Calu3 (cell line): ENCODE measurements at regions of chr6 and their contacts with region 1.

Region 1: GRCh38 chr6:155174576-155175211 is 89.1 kb upstream of the CLDN20 start:
- DNase-seq: peak; percentile 70
- H3K4me3 Mint-ChIP-seq: no peak overlapping the region
- H3K27ac Mint-ChIP-seq: peak overlapping the region; percentile 51
- H3K4me1 Mint-ChIP-seq: peaks cover 31% of the 10 kb centered on the region
- H3K27me3 Mint-ChIP-seq: no peaks in the 10 kb centered on the region
- CTCF ChIP-seq: peak; percentile 52

Region 2: GRCh38 chr6:154868143-154868594 is 306.5 kb before region 1 on chr6:
- CTCF ChIA-PET with region 1: interaction called, 7 read pairs
- intact Hi-C with region 1: loop called (anchors 2 kb)
- DNase-seq: peak; percentile 7
- H3K4me3 Mint-ChIP-seq: no peak overlapping the region
- H3K27ac Mint-ChIP-seq: no peak overlapping the region
- H3K4me1 Mint-ChIP-seq: peaks cover 9% of the 10 kb centered on the region
- H3K27me3 Mint-ChIP-seq: no peaks in the 10 kb centered on the region
- CTCF ChIP-seq: peak; percentile 23

Region 3: DNA sequence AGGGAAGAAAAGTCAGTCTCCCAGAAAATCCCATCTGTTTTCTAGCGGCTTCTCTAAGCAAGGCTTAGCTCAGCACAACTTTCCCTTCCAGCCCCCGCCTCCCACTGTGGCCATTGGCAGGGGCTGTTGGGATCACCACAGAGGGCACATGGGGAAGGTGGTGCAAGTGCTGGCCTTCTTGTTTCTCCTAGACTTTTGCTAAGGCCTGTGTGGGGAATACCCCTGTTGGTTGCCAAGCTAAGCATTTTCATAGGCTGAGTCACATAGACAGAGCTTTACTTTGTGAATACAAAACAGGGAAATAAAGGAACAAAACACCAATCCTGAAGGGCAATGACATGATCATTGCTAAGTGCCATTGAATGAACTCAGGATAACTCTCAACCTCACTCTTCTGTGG is 211.9 kb before region 1 on chr6:
- CTCF ChIA-PET with region 1: interaction called, 4 read pairs
- intact Hi-C with region 1: loop called (anchors 10 kb)
- DNase-seq: peak; percentile 46
- H3K4me3 Mint-ChIP-seq: no peak overlapping the region
- H3K27ac Mint-ChIP-seq: peak overlapping the region; percentile 71
- H3K4me1 Mint-ChIP-seq: peaks cover 28% of the 10 kb centered on the region
- H3K27me3 Mint-ChIP-seq: no peaks in the 10 kb centered on the region
- CTCF ChIP-seq: no peak

Region 4: GRCh38 chr6:155085582-155086257 is 89.0 kb before region 1 on chr6:
- CTCF ChIA-PET with region 1: interaction called, 3 read pairs
- intact Hi-C with region 1: loop called (anchors 1 kb)
- DNase-seq: peak; percentile 76
- H3K4me3 Mint-ChIP-seq: peak overlapping the region; percentile 40
- H3K27ac Mint-ChIP-seq: peak overlapping the region; percentile 66
- H3K4me1 Mint-ChIP-seq: peaks cover 31% of the 10 kb centered on the region
- H3K27me3 Mint-ChIP-seq: no peaks in the 10 kb centered on the region
- CTCF ChIP-seq: no peak

Region 5: GRCh38 chr6:155126727-155127439 is 47.8 kb before region 1 on chr6:
- CTCF ChIA-PET with region 1: no interaction called
- intact Hi-C with region 1: loop called (anchors 1 kb)
- DNase-seq: peak; percentile 80
- H3K4me3 Mint-ChIP-seq: peak overlapping the region; percentile 50
- H3K27ac Mint-ChIP-seq: peak overlapping the region; percentile 97
- H3K4me1 Mint-ChIP-seq: peaks cover 37% of the 10 kb centered on the region
- H3K27me3 Mint-ChIP-seq: no peaks in the 10 kb centered on the region
- CTCF ChIP-seq: no peak